SK-N-SH (cell line): ENCODE measurements at regions of chr10 and their contacts with region 1.

Region 1: DNA sequence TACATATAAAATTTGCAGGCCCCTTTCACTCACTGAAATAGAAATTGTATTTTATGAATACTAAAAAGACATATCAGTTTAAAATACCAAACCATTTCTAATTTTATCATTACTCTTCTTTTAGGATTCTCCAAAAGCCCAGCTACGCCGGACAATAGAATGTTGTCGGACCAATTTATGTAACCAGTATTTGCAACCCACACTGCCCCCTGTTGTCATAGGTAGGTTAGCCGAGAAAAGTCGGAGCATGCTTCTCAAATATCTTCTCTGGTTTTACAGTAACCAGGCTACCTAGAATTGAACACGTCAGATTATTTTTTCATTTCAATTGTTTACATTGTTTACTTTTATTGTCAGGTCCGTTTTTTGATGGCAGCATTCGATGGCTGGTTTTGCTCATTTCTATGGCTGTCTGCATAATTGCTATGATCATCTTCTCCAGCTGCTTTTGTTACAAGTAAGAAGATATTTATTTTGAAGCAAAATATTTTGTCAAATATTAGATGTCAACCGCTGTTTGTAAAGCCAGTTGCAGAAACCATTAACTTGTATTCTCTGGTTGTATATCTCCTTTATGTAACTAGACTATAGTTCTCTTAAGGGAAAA is 57.6 kb downstream of the MMRN2 start:
- DNase-seq: peak; percentile 60
- H3K4me3 ChIP-seq: no peak overlapping the region; a peak in 1 of 4 replicates
- H3K27ac ChIP-seq: no peak overlapping the region
- H3K4me1 ChIP-seq: peaks cover 4 to 11% of the 10 kb centered on the region in 2 experiments; a peak in 3 of 4 replicates
- H3K27me3 ChIP-seq: no peaks in the 10 kb centered on the region
- CTCF ChIP-seq: peak; percentile 91
- EP300 ChIP-seq: no peak
- RAD21 ChIP-seq: peak; percentile 84

Region 2: GRCh38 chr10:86688398-86688921 is 211.3 kb before region 1 on chr10:
- CTCF ChIA-PET with region 1: interaction called, 73 read pairs
- POLR2A ChIA-PET with region 1: no interaction called
- DNase-seq: peak; percentile 82
- H3K4me3 ChIP-seq: no peak overlapping the region; a peak in 1 of 4 replicates
- H3K27ac ChIP-seq: no peak overlapping the region
- H3K4me1 ChIP-seq: peaks cover 0 to 8% of the 10 kb centered on the region in 2 experiments; a peak in 1 of 4 replicates
- H3K27me3 ChIP-seq: no peaks in the 10 kb centered on the region
- CTCF ChIP-seq: peak; percentile 82
- EP300 ChIP-seq: no peak
- RAD21 ChIP-seq: peak; percentile 88

Region 3: GRCh38 chr10:86693721-86694369 is 205.9 kb before region 1 on chr10:
- CTCF ChIA-PET with region 1: interaction called, 73 read pairs
- POLR2A ChIA-PET with region 1: no interaction called
- DNase-seq: peak; percentile 75
- H3K4me3 ChIP-seq: no peak overlapping the region
- H3K27ac ChIP-seq: no peak overlapping the region
- H3K4me1 ChIP-seq: peaks cover 0 to 6% of the 10 kb centered on the region in 2 experiments; a peak in 1 of 4 replicates
- H3K27me3 ChIP-seq: no peaks in the 10 kb centered on the region
- CTCF ChIP-seq: peak; percentile 75
- EP300 ChIP-seq: no peak
- RAD21 ChIP-seq: peak; percentile 64

Region 4: GRCh38 chr10:86710987-86711512 is 188.7 kb before region 1 on chr10:
- CTCF ChIA-PET with region 1: interaction called, 18 read pairs
- POLR2A ChIA-PET with region 1: interaction called, 8 read pairs
- DNase-seq: peak; percentile 97
- H3K4me3 ChIP-seq: peak overlapping the region; percentile 61 to 64
- H3K27ac ChIP-seq: peak overlapping the region; percentile 65 to 75
- H3K4me1 ChIP-seq: peaks cover 10 to 11% of the 10 kb centered on the region in 2 experiments; a peak in 2 of 4 replicates
- H3K27me3 ChIP-seq: no peaks in the 10 kb centered on the region
- CTCF ChIP-seq: peak; percentile 72
- EP300 ChIP-seq: no peak; a peak in 1 of 4 replicates
- RAD21 ChIP-seq: peak; percentile 68

Region 5: GRCh38 chr10:86755740-86756510 is 143.8 kb before region 1 on chr10:
- CTCF ChIA-PET with region 1: interaction called, 21 read pairs
- POLR2A ChIA-PET with region 1: interaction called, 3 read pairs
- DNase-seq: peak; percentile 99
- H3K4me3 ChIP-seq: peak overlapping the region; percentile 73 to 83
- H3K27ac ChIP-seq: peak overlapping the region; percentile 98
- H3K4me1 ChIP-seq: peaks cover 12 to 23% of the 10 kb centered on the region in 2 experiments; a peak in 3 of 4 replicates
- H3K27me3 ChIP-seq: no peaks in the 10 kb centered on the region
- CTCF ChIP-seq: no peak
- EP300 ChIP-seq: no peak
- RAD21 ChIP-seq: peak; percentile 24; the same call in 1 of the 2 replicates

Region 6: DNA sequence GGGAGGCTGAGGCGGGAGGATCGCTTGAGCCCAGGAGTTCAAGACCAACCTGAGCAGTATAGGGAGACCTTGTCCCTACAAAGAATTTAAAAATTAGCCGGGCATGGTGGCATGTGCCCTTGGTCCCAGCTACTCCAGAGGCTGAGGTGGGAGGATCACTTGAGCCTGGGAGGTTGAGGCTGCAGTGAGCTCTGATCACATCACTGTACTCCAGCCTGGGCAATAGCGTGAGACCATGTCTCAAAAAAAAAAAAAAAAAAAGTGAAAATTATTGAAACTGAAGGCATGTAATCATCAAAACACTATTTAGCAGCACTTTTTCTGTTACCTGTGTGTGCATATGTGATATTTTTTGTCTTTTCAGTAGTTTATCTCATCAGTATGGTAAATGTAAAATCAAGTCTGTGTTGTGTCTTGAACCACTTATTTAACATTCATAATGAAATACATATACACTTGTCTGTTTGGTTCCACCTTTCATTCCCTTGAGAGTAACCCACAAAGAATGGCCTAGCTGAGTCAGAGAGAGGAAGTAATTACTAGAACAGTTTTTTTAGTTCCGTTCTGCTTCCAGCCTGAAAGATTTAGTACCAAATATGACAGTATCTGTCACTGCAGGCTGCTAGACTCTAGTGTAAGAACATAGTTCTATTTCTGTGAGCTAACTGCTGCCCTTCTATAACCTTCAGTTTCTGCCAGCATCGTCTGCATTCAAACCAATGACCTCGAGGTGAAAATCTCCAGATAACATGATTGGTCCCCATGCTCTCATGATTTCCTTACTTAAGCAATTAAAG is 11.0 kb before region 1 on chr10:
- CTCF ChIA-PET with region 1: interaction called, 12 read pairs
- POLR2A ChIA-PET with region 1: interaction called, 3 read pairs
- DNase-seq: no peak
- H3K4me3 ChIP-seq: no peak overlapping the region
- H3K27ac ChIP-seq: peak overlapping the region; percentile 51 to 64
- H3K4me1 ChIP-seq: peaks cover 3 to 10% of the 10 kb centered on the region in 2 experiments; a peak in 3 of 4 replicates
- H3K27me3 ChIP-seq: no peaks in the 10 kb centered on the region
- CTCF ChIP-seq: no peak
- EP300 ChIP-seq: peak in 1 of 2 experiments; percentile 9; a peak in 1 of 4 replicates
- RAD21 ChIP-seq: no peak